RWPE1 (cell line): ENCODE measurements at regions of chr5 and their contacts with region 1.

Region 1: GRCh38 chr5:2486373-2486772 is 265.1 kb downstream of the IRX2 start:
- DNase-seq: no peak
- H3K27ac ChIP-seq: no peak overlapping the region
- CTCF ChIP-seq: no peak

Region 2: DNA sequence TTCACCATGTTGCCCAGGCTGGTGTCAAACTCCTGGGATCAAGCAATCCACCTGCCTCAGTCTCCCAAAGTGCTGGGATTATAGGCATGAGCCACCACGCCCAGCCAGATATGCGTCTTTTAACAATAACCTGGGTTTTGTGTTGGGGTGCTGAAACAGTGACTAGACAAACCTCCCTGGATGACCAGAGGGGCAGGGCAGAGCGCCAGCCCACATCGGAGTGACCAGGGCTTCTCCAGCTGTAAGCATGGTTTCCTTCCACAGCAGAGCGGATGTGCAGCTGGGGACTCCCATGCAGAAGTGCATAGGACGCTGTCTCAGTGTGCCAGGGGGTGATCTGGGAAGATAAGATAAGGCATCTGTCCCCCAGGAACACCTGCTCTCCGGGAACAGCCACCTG is 20.2 kb after region 1 on chr5:
- CTCF ChIA-PET with region 1: interaction called, 10 read pairs
- POLR2A ChIA-PET with region 1: no interaction called
- DNase-seq: no peak
- H3K27ac ChIP-seq: no peak overlapping the region
- CTCF ChIP-seq: no peak